ENCODE measurements at regions of chr11 and their contacts with region 1.

Region 1: GRCh38 chr11:33065445-33066178 is 26.2 kb downstream of the TCP11L1 start:
- DNase-seq: peak; percentile 62 to 83 (median 76)
- ATAC-seq: peak; percentile 91
- H3K4me3 ChIP-seq: no peak overlapping the region
- H3K4me3 Mint-ChIP-seq: peak overlapping the region in 2 of 10 donors; percentile 42 to 43
- H3K27ac ChIP-seq: no peak overlapping the region
- H3K27ac Mint-ChIP-seq: peak overlapping the region in 4 of 9 donors; percentile 14 to 83 (median 58)
- H3K4me1 ChIP-seq: peaks cover 0 to 21% of the 10 kb centered on the region in 2 donors
- H3K4me1 Mint-ChIP-seq: peaks cover 24 to 36% (median 29%) of the 10 kb centered on the region in 7 donors
- H3K27me3 ChIP-seq: no peaks in the 10 kb centered on the region
- H3K27me3 Mint-ChIP-seq: no peaks in the 10 kb centered on the region

Region 2: GRCh38 chr11:32809313-32809712 is 256.3 kb before region 1 on chr11:
- CTCF ChIA-PET with region 1: no interaction called
- POLR2A ChIA-PET with region 1: no interaction called
- intact Hi-C with region 1: loop called (anchors 1 to 2 kb)
- DNase-seq: peak in 7 of 9 donors; percentile 5 to 48 (median 15)
- ATAC-seq: peak; percentile 82
- H3K4me3 ChIP-seq: no peak overlapping the region
- H3K4me3 Mint-ChIP-seq: no peak overlapping the region
- H3K27ac ChIP-seq: no peak overlapping the region
- H3K27ac Mint-ChIP-seq: no peak overlapping the region
- H3K4me1 ChIP-seq: no peaks in the 10 kb centered on the region
- H3K4me1 Mint-ChIP-seq: no peaks in the 10 kb centered on the region
- H3K27me3 ChIP-seq: no peaks in the 10 kb centered on the region
- H3K27me3 Mint-ChIP-seq: peaks cover 0 to 8% (median 0%) of the 10 kb centered on the region in 5 donors

Region 3: DNA sequence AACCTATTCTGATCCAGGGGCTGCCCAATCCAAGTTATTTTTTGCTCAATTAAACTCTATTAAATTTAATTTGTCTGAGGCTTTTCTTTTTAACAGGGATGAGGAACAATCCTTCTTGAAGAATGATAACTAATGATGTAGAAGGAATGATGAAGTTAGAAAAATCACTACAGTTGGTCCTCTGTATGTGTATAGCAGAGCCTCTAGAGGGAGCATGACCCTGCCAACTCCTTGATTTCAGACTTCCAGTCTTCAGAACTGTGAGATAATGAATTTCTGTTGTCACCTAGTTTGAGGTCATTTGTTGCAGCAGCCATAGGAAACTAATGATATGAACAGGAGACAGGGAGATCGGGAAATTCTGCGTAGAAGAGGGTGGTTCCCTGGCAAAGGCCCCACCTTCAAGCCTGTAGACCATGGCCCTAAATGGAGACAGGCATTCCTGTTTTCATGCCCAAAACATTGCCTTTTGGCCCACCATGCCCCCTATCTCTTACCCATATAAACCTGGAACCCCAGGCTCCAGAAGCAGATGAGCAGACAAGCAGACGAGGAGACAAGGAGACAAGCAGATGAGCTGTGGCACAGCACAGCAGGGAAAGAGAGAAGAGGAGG is 180.7 kb before region 1 on chr11:
- CTCF ChIA-PET with region 1: interaction called, 4 read pairs
- POLR2A ChIA-PET with region 1: no interaction called
- intact Hi-C with region 1: loop called (anchors 1 kb)
- DNase-seq: no peak
- ATAC-seq: peak; percentile 55
- H3K4me3 ChIP-seq: no peak overlapping the region
- H3K4me3 Mint-ChIP-seq: no peak overlapping the region
- H3K27ac ChIP-seq: no peak overlapping the region
- H3K27ac Mint-ChIP-seq: no peak overlapping the region
- H3K4me1 ChIP-seq: no peaks in the 10 kb centered on the region
- H3K4me1 Mint-ChIP-seq: peaks cover 0 to 6% (median 0%) of the 10 kb centered on the region in 7 donors
- H3K27me3 ChIP-seq: no peaks in the 10 kb centered on the region
- H3K27me3 Mint-ChIP-seq: peaks cover 0 to 11% (median 0%) of the 10 kb centered on the region in 5 donors

Region 4: GRCh38 chr11:32968541-32968940 is 97.1 kb before region 1 on chr11:
- CTCF ChIA-PET with region 1: interaction called, 179 read pairs
- POLR2A ChIA-PET with region 1: no interaction called
- intact Hi-C with region 1: no loop called
- DNase-seq: no peak
- ATAC-seq: no peak
- H3K4me3 ChIP-seq: no peak overlapping the region
- H3K4me3 Mint-ChIP-seq: no peak overlapping the region
- H3K27ac ChIP-seq: no peak overlapping the region
- H3K27ac Mint-ChIP-seq: no peak overlapping the region
- H3K4me1 ChIP-seq: no peaks in the 10 kb centered on the region
- H3K4me1 Mint-ChIP-seq: peaks cover 0 to 5% (median 0%) of the 10 kb centered on the region in 7 donors
- H3K27me3 ChIP-seq: no peaks in the 10 kb centered on the region
- H3K27me3 Mint-ChIP-seq: no peaks in the 10 kb centered on the region

Region 5: DNA sequence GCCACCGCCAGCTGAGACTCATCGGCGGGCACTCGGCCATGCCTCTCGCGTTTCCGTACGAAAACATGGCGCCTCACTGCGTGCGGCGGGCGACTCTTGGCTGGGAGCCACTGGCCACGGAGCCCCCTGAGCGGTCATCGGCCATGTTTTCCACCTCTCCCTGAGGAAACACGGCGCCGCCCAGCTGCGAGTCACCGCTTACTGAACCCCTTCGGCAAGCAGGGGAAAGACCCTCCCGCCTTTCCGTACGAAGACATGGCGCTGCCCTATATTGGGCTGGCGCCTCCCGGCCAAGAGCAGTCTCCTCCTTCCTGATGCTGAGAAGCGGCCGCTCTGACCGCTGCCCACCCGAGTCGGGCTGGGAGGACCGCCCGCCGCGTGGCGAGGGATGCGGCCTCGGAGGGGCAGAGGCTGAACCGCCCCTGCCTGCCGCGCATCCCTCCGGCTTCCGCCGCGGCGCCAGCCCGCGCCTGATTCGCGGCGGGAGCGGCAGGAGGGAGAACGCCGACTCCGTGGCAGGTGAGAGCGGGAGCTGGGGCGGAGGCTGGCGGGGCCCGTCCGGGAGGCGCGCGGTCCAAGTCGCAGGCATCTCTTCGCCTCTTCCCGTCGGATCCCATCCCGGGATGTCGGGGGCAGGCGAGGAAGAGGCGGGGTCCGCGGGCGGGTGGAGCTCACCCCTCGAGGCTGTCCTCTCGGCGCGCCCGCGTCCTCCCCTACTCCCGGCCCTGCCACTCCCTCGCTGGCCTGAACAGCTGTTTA is 26.2 kb before region 1 on chr11 and contains the start of gene TCP11L1:
- CTCF ChIA-PET with region 1: interaction called, 10 read pairs
- POLR2A ChIA-PET with region 1: interaction called, 17 read pairs
- intact Hi-C with region 1: loop called (anchors 1 kb)
- DNase-seq: peak; percentile 57 to 88 (median 76)
- ATAC-seq: peak; percentile 93
- H3K4me3 ChIP-seq: peak within 1 kb of the TSS; percentile 100
- H3K4me3 Mint-ChIP-seq: peak within 1 kb of the TSS; percentile 91 to 97 (median 94)
- H3K27ac ChIP-seq: peak within 1 kb of the TSS; percentile 82
- H3K27ac Mint-ChIP-seq: peak within 1 kb of the TSS; percentile 77 to 95 (median 92)
- H3K4me1 ChIP-seq: peaks cover 3 to 9% of the 10 kb centered on the region in 2 donors
- H3K4me1 Mint-ChIP-seq: peaks cover 0 to 17% (median 14%) of the 10 kb centered on the region in 7 donors
- H3K27me3 ChIP-seq: no peaks in the 10 kb centered on the region
- H3K27me3 Mint-ChIP-seq: peaks cover 0 to 17% (median 0%) of the 10 kb centered on the region in 5 donors
- total RNA-seq, gene TCP11L1: 9.1 to 17.1 (median 13.3) TPM

Region 6: GRCh38 chr11:33329705-33330329 is 264.2 kb after region 1 on chr11:
- CTCF ChIA-PET with region 1: interaction called, 3 read pairs
- POLR2A ChIA-PET with region 1: no interaction called
- intact Hi-C with region 1: loop called in 1 of 2 experiments (anchors 1 kb)
- DNase-seq: peak in 7 of 9 donors; percentile 20 to 59 (median 49)
- ATAC-seq: peak; percentile 82
- H3K4me3 ChIP-seq: no peak overlapping the region
- H3K4me3 Mint-ChIP-seq: no peak overlapping the region
- H3K27ac ChIP-seq: no peak overlapping the region
- H3K27ac Mint-ChIP-seq: peak overlapping the region in 2 of 9 donors; percentile 54 to 80
- H3K4me1 ChIP-seq: no peaks in the 10 kb centered on the region
- H3K4me1 Mint-ChIP-seq: peaks cover 2 to 45% (median 28%) of the 10 kb centered on the region in 7 donors
- H3K27me3 ChIP-seq: no peaks in the 10 kb centered on the region
- H3K27me3 Mint-ChIP-seq: no peaks in the 10 kb centered on the region

Measured in naive thymus-derived CD4-positive, alpha-beta T cell (primary cell).